CD4-positive, alpha-beta memory T cell (primary cell): ENCODE measurements at regions of chr9 and their contacts with region 1.

Region 1: GRCh38 chr9:132240753-132241493 is 79.1 kb downstream of the NTNG2 start:
- DNase-seq: peak; percentile 99 to 100 (median 99)
- H3K4me3 ChIP-seq: peak overlapping the region; percentile 23 to 85
- H3K4me3 Mint-ChIP-seq: peak overlapping the region; percentile 90 to 99 (median 98)
- H3K27ac ChIP-seq: peak overlapping the region; percentile 42
- H3K27ac Mint-ChIP-seq: peak overlapping the region; percentile 78 to 97 (median 94)
- H3K4me1 ChIP-seq: peaks cover 22% of the 10 kb centered on the region
- H3K4me1 Mint-ChIP-seq: peaks cover 7 to 27% (median 16%) of the 10 kb centered on the region in 4 donors
- H3K27me3 ChIP-seq: no peaks in the 10 kb centered on the region
- H3K27me3 Mint-ChIP-seq: peaks cover 3% of the 10 kb centered on the region in 2 donors

Region 2: DNA sequence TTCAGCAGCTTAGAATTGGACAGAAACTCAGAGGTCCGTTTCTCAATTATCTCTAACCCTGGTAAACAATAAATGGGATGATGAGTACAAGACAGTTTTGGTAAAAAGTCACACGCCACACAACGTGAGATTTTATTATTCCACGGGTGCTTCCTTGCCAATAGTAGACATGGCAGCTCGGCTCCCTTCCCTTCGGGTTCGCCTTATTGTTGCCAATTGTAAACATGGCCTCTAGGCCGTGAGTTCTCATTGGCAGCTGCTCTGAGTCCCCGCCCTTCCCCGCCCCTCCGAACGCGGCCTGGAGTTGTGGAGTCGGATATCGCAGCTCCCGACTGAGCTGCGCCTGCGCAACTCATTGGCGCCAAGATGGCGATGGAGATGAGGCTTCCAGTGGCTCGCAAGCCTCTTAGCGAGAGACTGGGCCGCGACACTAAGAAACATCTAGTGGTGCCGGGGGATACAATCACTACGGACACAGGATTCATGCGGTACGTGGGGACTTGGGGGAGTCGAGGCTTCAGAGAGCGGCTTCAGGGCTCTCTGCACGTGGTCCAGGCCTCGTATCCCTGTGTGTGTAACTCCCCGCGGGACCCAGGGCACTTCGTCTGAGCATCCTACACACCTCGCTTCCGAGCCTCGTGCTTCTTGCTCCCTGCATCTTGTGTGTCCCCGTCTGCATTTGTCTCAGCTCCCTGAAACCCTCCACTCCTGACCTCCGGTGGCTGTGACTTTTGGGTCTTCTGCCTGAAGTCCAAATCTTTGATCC is 1547.3 kb before region 1 on chr9 and contains the start of gene EXOSC2:
- CTCF ChIA-PET with region 1: no interaction called
- POLR2A ChIA-PET with region 1: no interaction called
- intact Hi-C with region 1: loop called (anchors 5 kb)
- DNase-seq: peak; percentile 88 to 99 (median 92)
- H3K4me3 ChIP-seq: peak within 1 kb of the TSS; percentile 91 to 93
- H3K4me3 Mint-ChIP-seq: peak within 1 kb of the TSS; percentile 92 to 99 (median 95)
- H3K27ac ChIP-seq: peak within 1 kb of the TSS; percentile 80
- H3K27ac Mint-ChIP-seq: peak within 1 kb of the TSS; percentile 83 to 98 (median 96)
- H3K4me1 ChIP-seq: peaks cover 40% of the 10 kb centered on the region
- H3K4me1 Mint-ChIP-seq: peaks cover 32 to 63% (median 44%) of the 10 kb centered on the region in 4 donors
- H3K27me3 ChIP-seq: no peaks in the 10 kb centered on the region
- H3K27me3 Mint-ChIP-seq: no peaks in the 10 kb centered on the region
- total RNA-seq, gene EXOSC2: 53.9 to 60.8 TPM

Region 3: GRCh38 chr9:131762356-131762932 is 478.5 kb before region 1 on chr9:
- CTCF ChIA-PET with region 1: interaction called, 124 read pairs
- POLR2A ChIA-PET with region 1: interaction called, 7 read pairs
- intact Hi-C with region 1: loop called (anchors 1 kb)
- DNase-seq: peak; percentile 64 to 74 (median 67)
- H3K4me3 ChIP-seq: no peak overlapping the region
- H3K4me3 Mint-ChIP-seq: no peak overlapping the region
- H3K27ac ChIP-seq: no peak overlapping the region
- H3K27ac Mint-ChIP-seq: peak overlapping the region in 2 of 7 donors; percentile 19 to 35
- H3K4me1 ChIP-seq: peaks cover 7% of the 10 kb centered on the region
- H3K4me1 Mint-ChIP-seq: no peaks in the 10 kb centered on the region
- H3K27me3 ChIP-seq: no peaks in the 10 kb centered on the region
- H3K27me3 Mint-ChIP-seq: peaks cover 2 to 4% of the 10 kb centered on the region in 2 donors

Region 4: DNA sequence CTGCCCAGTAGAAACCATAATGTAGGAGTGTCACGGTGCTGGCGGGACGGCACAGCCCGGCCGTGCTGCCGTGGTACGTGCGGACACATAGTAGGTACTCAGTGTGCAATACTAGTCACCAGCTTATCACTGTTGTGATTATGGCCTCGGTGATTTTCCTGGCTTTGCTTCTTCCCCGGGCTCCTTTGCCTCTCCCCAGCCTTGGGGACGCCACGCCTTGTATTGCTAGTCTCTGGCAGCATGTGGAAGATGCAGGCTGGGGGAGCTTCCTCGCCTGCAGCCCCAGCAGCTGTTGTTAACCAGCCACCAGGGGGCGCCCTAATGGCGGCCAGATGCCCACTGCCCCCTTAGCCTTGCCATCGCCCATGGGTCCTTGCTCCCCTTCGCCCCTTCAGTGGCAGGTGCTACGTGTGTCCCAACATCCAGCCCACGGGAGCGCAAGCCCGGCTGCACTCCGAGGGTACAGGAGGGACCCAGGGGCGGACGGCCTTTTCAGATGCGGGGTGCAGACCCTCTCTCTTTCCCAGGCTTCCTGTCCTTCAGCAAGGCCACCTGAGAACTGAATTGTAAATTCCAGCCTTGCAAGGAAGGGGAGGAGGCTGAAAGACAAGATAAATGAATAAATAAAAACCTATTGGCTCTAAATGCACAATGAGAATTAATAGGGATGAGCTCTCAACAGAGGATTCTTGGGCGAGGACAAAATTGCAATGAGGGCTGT is 71.1 kb before region 1 on chr9:
- CTCF ChIA-PET with region 1: interaction called, 69 read pairs
- POLR2A ChIA-PET with region 1: interaction called, 4 read pairs
- intact Hi-C with region 1: loop called (anchors 1 kb)
- DNase-seq: peak in 4 of 5 donors; percentile 42 to 55 (median 44)
- H3K4me3 ChIP-seq: no peak overlapping the region
- H3K4me3 Mint-ChIP-seq: peak overlapping the region in 1 of 8 donors; percentile 20
- H3K27ac ChIP-seq: no peak overlapping the region
- H3K27ac Mint-ChIP-seq: peak overlapping the region in 2 of 7 donors; percentile 31 to 32
- H3K4me1 ChIP-seq: no peaks in the 10 kb centered on the region
- H3K4me1 Mint-ChIP-seq: no peaks in the 10 kb centered on the region
- H3K27me3 ChIP-seq: peaks cover 5% of the 10 kb centered on the region
- H3K27me3 Mint-ChIP-seq: peaks cover 29 to 34% of the 10 kb centered on the region in 2 donors

Region 5: GRCh38 chr9:132230605-132231004 is 10.3 kb before region 1 on chr9:
- CTCF ChIA-PET with region 1: no interaction called
- POLR2A ChIA-PET with region 1: no interaction called
- intact Hi-C with region 1: no loop called
- DNase-seq: no peak
- H3K4me3 ChIP-seq: no peak overlapping the region
- H3K4me3 Mint-ChIP-seq: no peak overlapping the region
- H3K27ac ChIP-seq: no peak overlapping the region
- H3K27ac Mint-ChIP-seq: no peak overlapping the region
- H3K4me1 ChIP-seq: no peaks in the 10 kb centered on the region
- H3K4me1 Mint-ChIP-seq: no peaks in the 10 kb centered on the region
- H3K27me3 ChIP-seq: no peaks in the 10 kb centered on the region
- H3K27me3 Mint-ChIP-seq: peaks cover 3 to 7% of the 10 kb centered on the region in 2 donors

Region 6: GRCh38 chr9:132268725-132269352 is 27.9 kb after region 1 on chr9:
- CTCF ChIA-PET with region 1: interaction called, 14 read pairs
- POLR2A ChIA-PET with region 1: no interaction called
- intact Hi-C with region 1: no loop called
- DNase-seq: peak; percentile 59 to 65 (median 63)
- H3K4me3 ChIP-seq: no peak overlapping the region
- H3K4me3 Mint-ChIP-seq: no peak overlapping the region
- H3K27ac ChIP-seq: no peak overlapping the region
- H3K27ac Mint-ChIP-seq: peak overlapping the region in 6 of 7 donors; percentile 48 to 87 (median 66)
- H3K4me1 ChIP-seq: no peaks in the 10 kb centered on the region
- H3K4me1 Mint-ChIP-seq: peaks cover 3 to 6% (median 4%) of the 10 kb centered on the region in 4 donors
- H3K27me3 ChIP-seq: no peaks in the 10 kb centered on the region
- H3K27me3 Mint-ChIP-seq: no peaks in the 10 kb centered on the region